ENCODE measurements at regions of chr9 and their contacts with region 1.

Region 1: GRCh38 chr9:36542355-36542754 is 30.3 kb upstream of the MELK start:
- DNase-seq: peak; percentile 36
- ATAC-seq: peak; percentile 90
- H3K4me3 Mint-ChIP-seq: no peak overlapping the region
- H3K27ac Mint-ChIP-seq: 0 out of 2 replicates have a peak overlapping the region, but pooled peaks have one; percentile 32
- H3K4me1 Mint-ChIP-seq: peaks cover 4% of the 10 kb centered on the region
- H3K27me3 Mint-ChIP-seq: no peaks in the 10 kb centered on the region
- CTCF ChIP-seq: no peak

Region 2: GRCh38 chr9:36436909-36437308 is 105.4 kb before region 1 on chr9:
- CTCF ChIA-PET with region 1: no interaction called
- POLR2A ChIA-PET with region 1: no interaction called
- DNase-seq: no peak
- ATAC-seq: no peak; the same call in 1 of the 2 replicates
- H3K4me3 Mint-ChIP-seq: no peak overlapping the region
- H3K27ac Mint-ChIP-seq: peak overlapping the region; percentile 89; the same call in 1 of the 2 replicates
- H3K4me1 Mint-ChIP-seq: peaks cover 43% of the 10 kb centered on the region
- H3K27me3 Mint-ChIP-seq: no peaks in the 10 kb centered on the region
- CTCF ChIP-seq: no peak

Region 3: GRCh38 chr9:36450110-36450732 is 92.1 kb before region 1 on chr9:
- CTCF ChIA-PET with region 1: interaction called, 10 read pairs
- POLR2A ChIA-PET with region 1: no interaction called
- DNase-seq: no peak
- ATAC-seq: no peak; the same call in 1 of the 2 replicates
- H3K4me3 Mint-ChIP-seq: no peak overlapping the region
- H3K27ac Mint-ChIP-seq: peak overlapping the region; percentile 74
- H3K4me1 Mint-ChIP-seq: peaks cover 28% of the 10 kb centered on the region
- H3K27me3 Mint-ChIP-seq: no peaks in the 10 kb centered on the region
- CTCF ChIP-seq: 0 out of 2 replicates have a peak, but pooled peaks have one; percentile 37

Measured in WTC11 (cell line).